Common myeloid progenitor, CD34-positive (primary cell): ENCODE measurements at regions of chr5 and their contacts with region 1.

Region 1: GRCh38 chr5:119411935-119412602 is 40.2 kb upstream of the HSD17B4 start:
- DNase-seq: peak; percentile 82 to 87 (median 84)
- H3K4me3 ChIP-seq: peak overlapping the region; percentile 35 to 96 (median 78)
- H3K27ac ChIP-seq: peak overlapping the region; percentile 9 to 75
- H3K4me1 ChIP-seq: peaks cover 0 to 15% (median 8%) of the 10 kb centered on the region in 4 experiments
- H3K27me3 ChIP-seq: no peaks in the 10 kb centered on the region

Region 2: DNA sequence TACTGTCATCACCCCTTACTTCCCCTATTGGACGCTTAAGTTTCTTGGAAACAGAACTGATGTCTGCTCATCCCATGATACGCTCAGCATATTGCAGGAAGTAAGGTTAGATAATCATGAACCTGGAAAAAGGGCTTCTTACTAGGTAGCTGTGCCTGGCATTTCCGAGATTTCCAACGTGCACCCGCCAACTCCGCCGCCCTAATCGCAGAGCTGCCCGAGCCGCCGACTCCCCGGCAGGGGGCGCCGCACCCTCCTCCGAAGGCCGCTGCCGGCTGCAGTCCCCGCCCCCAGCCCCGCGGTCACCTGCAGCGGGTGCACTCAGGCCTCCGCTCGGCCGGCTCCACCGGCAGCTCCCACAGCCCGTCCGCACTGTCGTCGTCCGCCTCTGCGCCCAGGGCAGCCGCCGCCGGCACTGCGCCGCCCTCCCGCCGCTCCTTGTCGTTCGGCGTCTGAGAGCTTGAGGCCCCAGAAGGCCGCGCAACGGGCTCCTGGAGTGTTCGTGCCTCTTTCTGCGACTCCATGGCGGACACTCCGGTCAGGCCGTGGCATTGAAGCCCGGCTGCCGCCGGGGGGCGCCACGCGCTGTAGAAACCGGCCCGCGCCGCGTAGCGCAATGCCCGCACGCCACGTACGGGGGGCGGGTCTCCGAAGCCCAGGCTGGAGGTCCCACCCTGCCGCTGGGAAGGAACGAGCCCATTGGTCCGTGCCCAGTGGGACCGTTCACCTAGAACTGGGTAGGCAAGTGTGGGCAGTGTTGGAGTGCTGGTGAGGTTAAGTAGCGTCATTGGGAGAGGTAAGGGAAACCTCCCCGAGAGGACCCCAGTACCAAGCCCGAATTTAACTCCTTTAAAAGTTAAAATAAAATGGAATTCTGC is 423.8 kb before region 1 on chr5 and contains the start of gene DTWD2:
- CTCF ChIA-PET with region 1: interaction called, 26 read pairs
- POLR2A ChIA-PET with region 1: no interaction called
- DNase-seq: peak; percentile 94 to 98 (median 96)
- H3K4me3 ChIP-seq: peak within 1 kb of the TSS; percentile 75 to 92 (median 84)
- H3K27ac ChIP-seq: peak within 1 kb of the TSS; percentile 82 to 89
- H3K4me1 ChIP-seq: peaks cover 8 to 19% (median 14%) of the 10 kb centered on the region in 4 experiments
- H3K27me3 ChIP-seq: no peaks in the 10 kb centered on the region

Region 3: GRCh38 chr5:119267958-119268386 is 144.1 kb before region 1 on chr5:
- CTCF ChIA-PET with region 1: interaction called, 23 read pairs
- POLR2A ChIA-PET with region 1: interaction called, 3 read pairs
- DNase-seq: peak; percentile 97 to 99 (median 98)
- H3K4me3 ChIP-seq: peak overlapping the region; percentile 73 to 98 (median 93)
- H3K27ac ChIP-seq: peak overlapping the region; percentile 82 to 91
- H3K4me1 ChIP-seq: peaks cover 31 to 50% (median 38%) of the 10 kb centered on the region in 4 experiments
- H3K27me3 ChIP-seq: no peaks in the 10 kb centered on the region

Region 4: GRCh38 chr5:119290161-119290569 is 121.9 kb before region 1 on chr5:
- CTCF ChIA-PET with region 1: interaction called, 12 read pairs
- POLR2A ChIA-PET with region 1: no interaction called
- DNase-seq: peak; percentile 36 to 89 (median 83)
- H3K4me3 ChIP-seq: peak overlapping the region in 1 of 7 experiments; percentile 39
- H3K27ac ChIP-seq: no peak overlapping the region
- H3K4me1 ChIP-seq: peaks cover 43 to 59% (median 51%) of the 10 kb centered on the region in 4 experiments
- H3K27me3 ChIP-seq: no peaks in the 10 kb centered on the region

Region 5: GRCh38 chr5:119322948-119323537 is 89.0 kb before region 1 on chr5:
- CTCF ChIA-PET with region 1: interaction called, 76 read pairs
- POLR2A ChIA-PET with region 1: no interaction called
- DNase-seq: peak in 1 of 3 donors; percentile 40
- H3K4me3 ChIP-seq: peak overlapping the region in 1 of 7 experiments; percentile 55
- H3K27ac ChIP-seq: peak overlapping the region; percentile 48 to 84
- H3K4me1 ChIP-seq: peaks cover 22 to 86% (median 63%) of the 10 kb centered on the region in 4 experiments
- H3K27me3 ChIP-seq: no peaks in the 10 kb centered on the region

Region 6: GRCh38 chr5:119340597-119341218 is 71.4 kb before region 1 on chr5:
- CTCF ChIA-PET with region 1: interaction called, 14 read pairs
- POLR2A ChIA-PET with region 1: no interaction called
- DNase-seq: peak in 1 of 3 donors; percentile 58
- H3K4me3 ChIP-seq: no peak overlapping the region
- H3K27ac ChIP-seq: peak overlapping the region in 1 of 2 experiments; percentile 28
- H3K4me1 ChIP-seq: peaks cover 39 to 84% (median 52%) of the 10 kb centered on the region in 4 experiments
- H3K27me3 ChIP-seq: no peaks in the 10 kb centered on the region

Region 7: DNA sequence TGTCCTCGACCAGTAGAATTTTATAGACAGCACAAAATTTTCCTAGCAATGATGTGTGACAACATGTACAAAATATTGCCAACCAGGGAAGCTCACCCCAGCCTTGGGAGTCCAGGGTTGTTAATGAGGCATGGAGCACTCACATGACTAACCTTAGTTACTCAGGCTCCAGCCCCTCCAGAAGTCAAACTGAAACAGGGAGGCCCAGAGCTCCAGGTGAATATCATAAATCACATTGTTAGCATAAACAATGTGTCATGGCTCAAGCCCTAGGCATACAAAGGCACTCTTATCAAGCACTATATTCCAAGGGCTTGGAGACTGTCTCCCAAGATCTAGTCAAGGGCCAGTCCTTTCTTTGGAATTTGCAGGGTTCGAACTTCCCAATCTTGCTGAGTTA is 11.8 kb before region 1 on chr5:
- CTCF ChIA-PET with region 1: interaction called, 29 read pairs
- POLR2A ChIA-PET with region 1: no interaction called
- DNase-seq: no peak
- H3K4me3 ChIP-seq: no peak overlapping the region
- H3K27ac ChIP-seq: no peak overlapping the region
- H3K4me1 ChIP-seq: peaks cover 7 to 15% (median 8%) of the 10 kb centered on the region in 4 experiments
- H3K27me3 ChIP-seq: no peaks in the 10 kb centered on the region

Region 8: DNA sequence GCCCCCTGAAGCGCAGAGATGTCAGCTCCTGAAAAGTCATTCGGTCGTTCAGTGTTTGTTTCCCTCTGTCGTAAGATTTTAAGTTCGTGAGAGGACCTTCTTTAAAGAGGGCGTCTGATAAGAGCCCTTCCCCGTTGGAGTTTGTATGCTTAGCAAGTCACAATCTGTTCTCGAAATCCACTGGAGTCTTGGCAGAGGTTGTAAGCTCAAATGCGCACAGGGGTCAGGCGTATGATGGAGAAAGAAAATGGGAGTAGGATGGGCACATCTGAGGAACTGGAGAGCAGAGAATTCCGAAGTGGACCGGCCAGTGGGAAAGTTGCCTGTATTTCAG is 40.9 kb after region 1 on chr5:
- CTCF ChIA-PET with region 1: no interaction called
- POLR2A ChIA-PET with region 1: no interaction called
- DNase-seq: peak in 2 of 3 donors; percentile 66 to 75
- H3K4me3 ChIP-seq: peak overlapping the region; percentile 72 to 96 (median 87)
- H3K27ac ChIP-seq: peak overlapping the region; percentile 72 to 83
- H3K4me1 ChIP-seq: peaks cover 0 to 16% (median 9%) of the 10 kb centered on the region in 4 experiments
- H3K27me3 ChIP-seq: no peaks in the 10 kb centered on the region

Region 9: GRCh38 chr5:119527351-119527750 is 115.3 kb after region 1 on chr5:
- CTCF ChIA-PET with region 1: no interaction called
- POLR2A ChIA-PET with region 1: no interaction called
- DNase-seq: no peak
- H3K4me3 ChIP-seq: no peak overlapping the region
- H3K27ac ChIP-seq: no peak overlapping the region
- H3K4me1 ChIP-seq: no peaks in the 10 kb centered on the region
- H3K27me3 ChIP-seq: no peaks in the 10 kb centered on the region